MCF 10A (cell line): ENCODE measurements at regions of chr6 and their contacts with region 1.

Region 1: DNA sequence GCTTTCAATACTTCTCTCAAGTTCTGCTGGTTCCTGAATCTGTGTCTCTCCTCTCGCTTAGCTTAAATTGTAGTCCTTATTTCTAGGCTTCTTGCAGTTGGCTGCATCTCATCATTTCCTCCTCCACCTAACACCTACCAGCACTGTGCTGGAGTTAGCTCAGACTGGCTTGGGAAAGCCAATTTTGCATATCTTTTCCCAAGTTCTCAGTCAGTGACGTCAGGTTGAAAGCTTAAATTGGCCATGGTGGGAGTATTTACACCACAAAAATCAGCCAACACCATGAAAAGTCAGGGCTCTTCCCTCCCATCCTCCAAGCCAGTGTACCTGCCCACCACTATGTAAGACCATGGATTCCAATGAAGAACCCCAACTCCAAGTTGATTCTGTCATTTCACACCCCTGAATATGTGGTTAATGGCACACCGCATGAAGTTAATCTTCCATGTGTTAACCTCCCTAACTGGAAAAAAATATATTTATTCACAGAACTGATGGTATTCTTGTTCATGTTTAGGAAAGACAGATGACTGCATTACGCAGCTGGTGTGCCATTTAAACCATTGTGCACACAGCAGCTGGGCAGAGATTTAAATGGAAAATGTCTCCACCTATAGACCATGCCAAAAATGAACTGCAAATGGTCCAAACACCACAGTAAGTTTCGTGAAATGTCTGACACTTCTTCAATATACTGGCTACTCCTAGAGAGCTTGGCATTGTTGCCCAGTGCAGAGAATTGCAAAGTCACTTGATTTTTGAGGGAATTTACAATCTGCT is 274.1 kb upstream of the MAP3K7 start:
- DNase-seq: peak; percentile 35
- H3K4me3 Mint-ChIP-seq: no peak overlapping the region
- H3K27ac Mint-ChIP-seq: no peak overlapping the region
- H3K4me1 Mint-ChIP-seq: no peaks in the 10 kb centered on the region
- H3K27me3 Mint-ChIP-seq: peaks cover 16% of the 10 kb centered on the region
- CTCF ChIP-seq: no peak

Region 2: GRCh38 chr6:90631046-90631445 is 230.0 kb before region 1 on chr6:
- CTCF ChIA-PET with region 1: interaction called, 4 read pairs
- POLR2A ChIA-PET with region 1: no interaction called
- intact Hi-C with region 1: loop called (anchors 10 kb)
- DNase-seq: no peak
- H3K4me3 Mint-ChIP-seq: no peak overlapping the region
- H3K27ac Mint-ChIP-seq: no peak overlapping the region
- H3K4me1 Mint-ChIP-seq: no peaks in the 10 kb centered on the region
- H3K27me3 Mint-ChIP-seq: peaks cover 56% of the 10 kb centered on the region
- CTCF ChIP-seq: no peak

Region 3: GRCh38 chr6:90846824-90847223 is 14.2 kb before region 1 on chr6:
- CTCF ChIA-PET with region 1: interaction called, 11 read pairs
- POLR2A ChIA-PET with region 1: interaction called, 3 read pairs
- intact Hi-C with region 1: no loop called
- DNase-seq: peak; percentile 80
- H3K4me3 Mint-ChIP-seq: no peak overlapping the region
- H3K27ac Mint-ChIP-seq: no peak overlapping the region
- H3K4me1 Mint-ChIP-seq: peaks cover 17% of the 10 kb centered on the region
- H3K27me3 Mint-ChIP-seq: no peaks in the 10 kb centered on the region
- CTCF ChIP-seq: no peak

Region 4: GRCh38 chr6:90940812-90941481 is 79.9 kb after region 1 on chr6:
- CTCF ChIA-PET with region 1: interaction called, 13 read pairs
- POLR2A ChIA-PET with region 1: no interaction called
- intact Hi-C with region 1: no loop called
- DNase-seq: peak; percentile 68
- H3K4me3 Mint-ChIP-seq: peak overlapping the region; percentile 43
- H3K27ac Mint-ChIP-seq: no peak overlapping the region
- H3K4me1 Mint-ChIP-seq: peaks cover 6% of the 10 kb centered on the region
- H3K27me3 Mint-ChIP-seq: no peaks in the 10 kb centered on the region
- CTCF ChIP-seq: peak; percentile 51